Activated naive CD4-positive, alpha-beta T cell treated with anti-CD3 and anti-CD28 coated beads for 36 hours (primary cell): ENCODE measurements at regions of chr2 and their contacts with region 1.

Region 1: DNA sequence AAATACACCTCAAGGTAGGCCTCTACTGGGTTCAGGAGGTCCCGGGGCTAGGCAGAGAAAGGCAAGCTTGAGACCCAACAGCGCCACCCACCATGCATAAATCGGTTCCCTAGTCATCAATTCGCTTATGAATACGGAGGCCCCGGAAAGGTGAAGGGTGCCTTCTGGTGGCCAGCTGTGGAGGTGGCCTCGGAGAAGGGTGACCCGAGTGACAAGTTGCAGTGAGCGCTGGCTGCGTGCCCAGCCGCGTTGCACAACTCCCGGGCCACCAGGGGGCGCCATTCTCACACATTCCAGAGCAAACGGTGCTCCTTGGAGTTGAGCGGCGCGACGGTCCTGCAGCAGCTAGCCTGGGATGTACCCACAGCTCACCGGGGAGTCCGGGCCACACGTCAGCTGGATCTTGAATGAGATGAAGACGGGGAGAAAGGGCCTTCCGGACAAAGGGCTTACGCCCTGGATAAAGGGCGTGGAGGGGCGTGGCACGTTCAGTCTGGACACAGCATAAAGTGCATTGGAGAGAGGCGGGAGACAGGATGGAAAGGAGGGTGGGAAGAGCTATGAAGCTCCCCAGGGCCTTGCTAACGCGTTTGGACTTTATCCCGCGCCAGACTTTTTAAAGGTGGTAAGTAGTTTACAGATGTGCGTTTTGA is 20.4 kb downstream of the TMSB10 start:
- DNase-seq: peak; percentile 100
- H3K4me3 Mint-ChIP-seq: peak overlapping the region; percentile 87
- H3K27ac Mint-ChIP-seq: peak overlapping the region; percentile 97
- H3K4me1 Mint-ChIP-seq: peaks cover 49% of the 10 kb centered on the region
- H3K27me3 Mint-ChIP-seq: no peaks in the 10 kb centered on the region

Region 2: DNA sequence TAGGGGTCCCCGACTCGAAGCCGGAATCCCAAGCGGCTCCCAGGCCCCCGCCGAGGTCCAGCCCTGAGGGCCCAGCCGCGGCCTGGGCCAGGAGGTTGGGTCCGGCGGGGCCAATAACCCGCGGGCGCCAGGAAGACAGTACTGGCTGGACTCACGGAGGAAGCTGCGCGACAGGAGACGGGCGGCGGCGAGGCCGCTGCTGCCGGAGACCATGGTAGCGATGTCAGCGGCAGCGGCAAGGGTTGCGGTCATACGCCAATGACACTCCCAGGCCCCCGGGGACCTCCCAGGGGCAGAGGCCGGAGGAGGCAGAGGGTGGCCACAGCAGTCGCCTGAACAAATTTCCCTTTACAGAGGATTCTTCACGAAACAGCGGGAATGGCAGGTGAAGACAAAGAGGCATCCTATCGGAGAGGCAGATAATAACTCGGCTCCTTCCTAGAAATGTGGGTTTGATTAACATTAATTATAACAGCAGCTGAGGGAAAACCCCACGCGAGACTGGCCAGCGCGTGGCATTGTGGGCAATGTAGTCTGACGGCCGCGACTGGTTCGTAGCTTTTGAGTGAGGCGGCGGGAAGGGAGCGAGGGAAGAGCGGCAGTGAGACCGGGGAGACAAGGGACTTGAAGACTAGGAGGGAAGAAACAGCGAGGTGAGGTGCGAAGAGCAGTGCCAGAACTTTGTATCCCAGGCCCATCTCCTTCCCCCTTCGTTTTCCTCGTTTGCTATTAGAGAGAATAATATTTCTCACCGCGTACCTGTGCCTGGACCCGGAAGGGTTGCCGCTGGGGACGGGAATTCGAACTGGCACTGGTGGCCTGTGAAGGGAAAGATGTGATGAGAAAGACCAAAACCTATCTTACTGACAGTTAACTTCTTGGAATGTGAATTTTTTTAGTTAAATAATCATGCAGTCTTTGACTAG is 466.6 kb before region 1 on chr2 and contains the start of gene SUCLG1:
- CTCF ChIA-PET with region 1: interaction called, 4 read pairs
- intact Hi-C with region 1: loop called (anchors 1 kb)
- DNase-seq: peak; percentile 89
- H3K4me3 Mint-ChIP-seq: peak within 1 kb of the TSS; percentile 86
- H3K27ac Mint-ChIP-seq: peak within 1 kb of the TSS; percentile 92
- H3K4me1 Mint-ChIP-seq: peaks cover 40% of the 10 kb centered on the region
- H3K27me3 Mint-ChIP-seq: no peaks in the 10 kb centered on the region
- total RNA-seq, gene SUCLG1: 75.3 to 80.7 TPM

Region 3: DNA sequence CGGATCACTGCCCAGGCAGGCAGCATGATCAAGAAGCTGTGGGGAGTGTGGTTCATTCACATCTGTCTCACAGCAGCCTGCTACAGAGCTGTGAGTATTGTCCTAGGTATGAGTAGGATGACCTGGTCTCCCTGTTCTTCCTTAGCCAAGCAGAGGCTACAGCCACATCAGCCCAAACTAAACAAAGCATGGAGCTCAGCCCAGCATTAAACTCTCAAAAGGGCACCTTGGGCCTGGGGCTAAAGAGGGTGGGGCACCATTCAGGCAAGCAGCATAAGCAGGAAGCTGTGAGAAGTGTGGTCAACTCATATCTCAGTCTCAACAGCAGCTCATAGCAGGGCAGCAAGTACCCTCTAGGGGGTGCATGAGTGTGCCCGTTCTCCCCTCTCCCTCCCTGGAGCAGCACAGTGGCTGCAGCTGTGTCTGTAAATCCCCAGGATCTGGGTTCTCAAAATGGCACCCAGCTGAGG is 184.5 kb before region 1 on chr2:
- CTCF ChIA-PET with region 1: interaction called, 10 read pairs
- intact Hi-C with region 1: loop called (anchors 1 kb)
- DNase-seq: peak; percentile 79
- H3K4me3 Mint-ChIP-seq: no peak overlapping the region
- H3K27ac Mint-ChIP-seq: no peak overlapping the region
- H3K4me1 Mint-ChIP-seq: peaks cover 24% of the 10 kb centered on the region
- H3K27me3 Mint-ChIP-seq: no peaks in the 10 kb centered on the region

Region 4: GRCh38 chr2:84870306-84870705 is 55.5 kb before region 1 on chr2:
- CTCF ChIA-PET with region 1: interaction called, 75 read pairs
- intact Hi-C with region 1: loop called (anchors 1 kb)
- DNase-seq: no peak
- H3K4me3 Mint-ChIP-seq: no peak overlapping the region
- H3K27ac Mint-ChIP-seq: peak overlapping the region; percentile 6
- H3K4me1 Mint-ChIP-seq: peaks cover 89% of the 10 kb centered on the region
- H3K27me3 Mint-ChIP-seq: no peaks in the 10 kb centered on the region

Region 5: GRCh38 chr2:84912984-84913383 is 12.9 kb before region 1 on chr2:
- CTCF ChIA-PET with region 1: interaction called, 43 read pairs
- intact Hi-C with region 1: no loop called
- DNase-seq: no peak
- H3K4me3 Mint-ChIP-seq: no peak overlapping the region
- H3K27ac Mint-ChIP-seq: no peak overlapping the region
- H3K4me1 Mint-ChIP-seq: peaks cover 34% of the 10 kb centered on the region
- H3K27me3 Mint-ChIP-seq: no peaks in the 10 kb centered on the region

Region 6: DNA sequence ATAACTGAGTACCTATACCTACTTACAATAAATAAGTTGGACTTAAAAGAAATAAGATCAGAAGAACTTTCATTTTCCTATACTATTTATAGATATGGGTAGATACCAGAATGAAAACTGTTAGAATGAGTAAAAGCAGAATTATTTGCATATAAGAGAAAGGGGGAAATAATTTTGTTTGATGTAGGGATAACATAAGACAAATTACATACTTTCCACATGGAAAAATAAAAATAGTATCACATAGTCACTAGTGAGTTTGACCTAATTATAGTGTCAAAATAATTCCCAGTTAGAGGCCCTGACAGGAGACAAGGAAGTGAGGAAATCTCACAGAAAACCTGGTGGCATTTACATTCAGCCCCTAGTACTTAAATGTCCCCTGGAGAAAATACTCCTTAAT is 73.7 kb after region 1 on chr2:
- CTCF ChIA-PET with region 1: interaction called, 24 read pairs
- intact Hi-C with region 1: no loop called
- DNase-seq: no peak
- H3K4me3 Mint-ChIP-seq: peak overlapping the region; percentile 53
- H3K27ac Mint-ChIP-seq: peak overlapping the region; percentile 97
- H3K4me1 Mint-ChIP-seq: peaks cover 79% of the 10 kb centered on the region
- H3K27me3 Mint-ChIP-seq: no peaks in the 10 kb centered on the region

Region 7: DNA sequence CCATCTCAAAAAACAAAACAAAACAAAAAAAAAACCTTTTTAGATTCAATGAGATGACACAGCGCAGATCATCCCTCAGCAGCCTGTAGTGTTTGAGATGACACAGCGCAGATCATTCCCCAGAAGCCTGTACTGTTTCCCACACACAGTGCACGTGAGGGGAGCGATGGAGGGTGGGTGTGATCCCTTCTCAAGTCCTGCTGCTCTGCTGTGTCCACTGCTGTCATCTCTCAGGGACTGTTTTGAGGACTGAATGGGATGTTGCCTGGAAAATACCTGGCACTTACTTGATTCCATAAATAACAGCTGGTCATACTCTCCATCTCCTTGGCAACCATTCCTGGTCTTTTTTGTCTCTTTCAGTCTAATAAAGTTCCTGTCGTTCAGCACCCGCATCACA is 376.3 kb after region 1 on chr2:
- CTCF ChIA-PET with region 1: interaction called, 37 read pairs
- intact Hi-C with region 1: loop called (anchors 1 kb)
- DNase-seq: no peak
- H3K4me3 Mint-ChIP-seq: no peak overlapping the region
- H3K27ac Mint-ChIP-seq: no peak overlapping the region
- H3K4me1 Mint-ChIP-seq: peaks cover 13% of the 10 kb centered on the region
- H3K27me3 Mint-ChIP-seq: no peaks in the 10 kb centered on the region